Dorsolateral prefrontal cortex (tissue), 120 donors: ENCODE measurements at regions of chr7 and their contacts with region 1.

Region 1: DNA sequence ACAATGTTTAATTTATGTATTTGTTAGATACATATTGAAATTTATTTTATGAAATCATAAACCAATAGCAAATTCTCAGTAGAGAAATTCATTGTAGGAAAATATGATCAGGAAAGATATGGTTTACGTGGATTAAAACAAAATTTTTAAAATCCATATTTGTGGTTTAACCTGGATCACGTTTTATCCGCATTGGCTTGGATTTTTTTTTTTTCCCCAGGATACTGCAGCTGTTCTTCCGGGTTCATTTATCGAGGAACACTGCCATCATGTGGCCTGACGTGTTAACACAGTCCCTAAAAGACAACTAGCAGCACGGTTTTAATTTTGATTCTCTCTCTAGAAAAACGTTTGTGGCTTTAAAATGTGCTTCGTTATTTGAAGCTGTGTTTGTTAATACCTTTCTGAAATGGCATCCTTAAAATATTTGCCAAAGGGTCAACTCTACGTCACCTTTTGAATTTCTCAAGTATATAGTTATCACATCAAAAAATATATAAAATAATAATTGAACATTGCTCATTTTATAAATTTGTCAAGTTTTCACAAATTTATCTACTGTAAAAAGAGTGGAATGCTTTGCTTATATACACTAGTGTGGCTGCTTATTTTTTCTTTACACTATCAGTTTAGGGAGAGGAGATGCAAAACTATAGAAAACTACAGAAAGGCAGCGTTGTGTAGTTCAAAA is 8.7 kb upstream of the ASB4 start:
- DNase-seq: peak in 9 of 10 donors; percentile 23 to 86 (median 58)
- H3K4me3 ChIP-seq: peak overlapping the region in 22 of 59 donors; percentile 1 to 61 (median 16)
- H3K27ac ChIP-seq: peak overlapping the region in 4 of 59 donors; percentile 3 to 21 (median 20)
- H3K27me3 ChIP-seq: no peaks in the 10 kb centered on the region
- CTCF ChIP-seq: peak; percentile 77 to 99 (median 90)

Region 2: GRCh38 chr7:95126053-95126709 is 350.9 kb before region 1 on chr7:
- intact Hi-C with region 1: no loop called
- DNase-seq: no peak
- H3K4me3 ChIP-seq: no peak overlapping the region
- H3K27ac ChIP-seq: no peak overlapping the region
- H3K27me3 ChIP-seq: no peaks in the 10 kb centered on the region
- CTCF ChIP-seq: no peak

Region 3: GRCh38 chr7:95199779-95200558 is 277.1 kb before region 1 on chr7:
- intact Hi-C with region 1: loop called in 1 of 2 experiments (anchors 10 kb)
- DNase-seq: peak in 9 of 10 donors; percentile 43 to 80 (median 52)
- H3K4me3 ChIP-seq: no peak overlapping the region
- H3K27ac ChIP-seq: peak overlapping the region in 29 of 59 donors; percentile 1 to 67 (median 36)
- H3K27me3 ChIP-seq: no peaks in the 10 kb centered on the region
- CTCF ChIP-seq: peak; percentile 28 to 89 (median 78)

Region 4: GRCh38 chr7:95357623-95358022 is 119.4 kb before region 1 on chr7:
- intact Hi-C with region 1: loop called (anchors 5 kb)
- DNase-seq: no peak
- H3K4me3 ChIP-seq: no peak overlapping the region
- H3K27ac ChIP-seq: no peak overlapping the region
- H3K27me3 ChIP-seq: peaks cover 0 to 3% (median 0%) of the 10 kb centered on the region in 45 donors
- CTCF ChIP-seq: peak in 53 of 56 donors; percentile 13 to 70 (median 47)

Region 5: DNA sequence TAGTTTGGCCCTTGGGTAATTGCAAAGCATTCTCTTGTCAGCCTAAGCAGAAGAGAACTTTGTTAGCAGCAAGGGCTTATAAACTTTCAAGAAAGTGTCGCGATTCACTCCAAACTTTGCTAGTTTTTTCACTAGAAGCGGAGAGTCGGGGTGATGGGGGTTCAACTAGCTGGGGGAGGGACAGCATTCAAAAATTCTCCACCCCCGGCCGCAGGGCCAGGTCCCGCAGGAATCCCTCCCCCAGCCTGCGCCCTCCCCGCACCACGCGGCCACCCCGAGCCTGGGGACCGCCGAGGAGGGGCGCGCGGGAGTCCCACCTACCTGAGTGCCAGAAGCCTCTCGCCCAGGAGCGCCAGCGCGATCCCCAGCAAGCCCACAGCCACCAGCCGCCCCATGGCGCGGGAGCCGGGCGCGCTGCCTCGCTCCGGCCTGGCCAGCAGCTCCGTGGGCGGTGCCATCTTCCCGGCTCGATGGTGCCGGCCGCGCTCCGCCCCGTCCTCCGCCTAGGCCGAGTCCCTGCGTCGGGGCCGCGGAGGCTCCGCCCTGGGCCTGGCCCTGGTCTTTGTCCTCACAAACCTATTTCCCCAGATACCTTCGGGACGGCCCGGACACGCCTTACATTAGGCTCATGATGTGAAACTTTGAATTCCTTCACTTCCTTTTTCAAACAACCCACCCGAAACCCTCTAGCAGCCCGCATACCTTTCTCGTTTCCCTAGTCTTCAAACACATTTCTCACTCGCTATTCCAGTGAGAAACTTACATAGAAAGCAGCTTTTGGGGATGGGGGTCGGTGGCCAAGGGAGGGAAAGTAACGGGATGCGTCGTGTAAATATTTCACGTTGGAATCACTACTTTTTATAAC is 42.3 kb before region 1 on chr7 and contains the start of gene PON2:
- intact Hi-C with region 1: loop called in 1 of 2 experiments (anchors 2 kb)
- DNase-seq: peak; percentile 5 to 77 (median 51)
- H3K4me3 ChIP-seq: peak within 1 kb of the TSS; percentile 52 to 93 (median 77)
- H3K27ac ChIP-seq: peak within 1 kb of the TSS; percentile 52 to 97 (median 93)
- H3K27me3 ChIP-seq: no peaks in the 10 kb centered on the region
- CTCF ChIP-seq: peak in 16 of 56 donors; percentile 6 to 36 (median 19)
- total RNA-seq, gene PON2: 79.1 to 321 (median 167) TPM